ENCODE measurements at regions of chr7 and their contacts with region 1.

Region 1: DNA sequence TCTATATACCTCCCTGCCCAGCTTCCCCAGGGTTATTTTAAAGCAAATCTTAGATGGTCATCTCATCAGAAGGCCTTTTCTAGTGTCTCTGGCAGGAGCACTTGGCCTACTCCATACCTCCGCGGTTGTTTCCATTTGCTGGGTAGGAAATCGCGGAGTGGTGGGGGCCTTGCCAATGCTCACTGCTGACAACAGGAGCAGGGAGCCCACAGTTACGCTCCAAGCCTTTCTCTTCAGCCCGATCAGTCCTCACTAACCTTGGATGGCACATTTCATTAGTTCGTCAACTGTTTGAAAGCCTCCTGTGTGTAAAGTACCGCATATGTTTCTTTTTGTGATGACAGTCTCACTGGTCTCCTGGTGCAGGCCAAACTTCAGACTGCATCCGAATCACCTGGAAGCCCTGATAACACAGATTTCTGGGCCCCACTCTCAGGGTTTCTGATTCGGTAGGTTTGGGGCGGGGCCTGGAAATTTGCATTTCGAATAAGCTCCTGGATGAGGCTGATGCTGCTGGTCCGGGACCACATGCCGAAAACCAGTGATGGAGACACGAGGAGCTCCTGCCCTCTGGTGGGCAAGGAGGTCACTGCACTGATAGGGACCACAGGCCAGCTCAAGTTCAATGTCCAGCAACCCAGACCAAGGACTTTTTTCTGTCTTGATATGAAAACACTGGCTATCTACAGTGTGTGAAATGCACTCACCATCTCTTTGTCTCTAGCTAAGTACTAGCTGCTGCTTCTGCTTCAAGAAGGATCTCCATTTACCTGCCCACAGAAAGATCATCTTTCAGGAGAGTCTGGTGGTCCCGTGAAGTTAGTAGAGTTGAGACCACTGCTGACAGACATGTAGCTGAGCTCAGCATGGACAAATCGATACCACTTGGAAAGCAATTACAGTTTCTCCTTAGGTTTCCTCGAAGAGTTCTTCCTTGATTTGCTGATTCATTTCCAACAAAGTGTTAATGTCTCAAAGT is 14.0 kb downstream of the LRGUK start:
- DNase-seq: peak; percentile 57
- H3K4me3 ChIP-seq: no peak overlapping the region
- H3K27ac ChIP-seq: no peak overlapping the region
- H3K4me1 ChIP-seq: no peaks in the 10 kb centered on the region
- H3K27me3 ChIP-seq: peaks cover 2% of the 10 kb centered on the region in 2 experiments
- CTCF ChIP-seq: peak; percentile 80 to 94
- POLR2A ChIP-seq: no peak

Region 2: GRCh38 chr7:132709971-132710567 is 1431.1 kb before region 1 on chr7:
- CTCF ChIA-PET with region 1: interaction called, 8 read pairs
- POLR2A ChIA-PET with region 1: no interaction called
- dilution Hi-C with region 1: no loop called
- intact Hi-C with region 1: loop called (anchors 5 kb)
- DNase-seq: peak; percentile 59
- H3K4me3 ChIP-seq: no peak overlapping the region
- H3K27ac ChIP-seq: no peak overlapping the region
- H3K4me1 ChIP-seq: no peaks in the 10 kb centered on the region
- H3K27me3 ChIP-seq: peaks cover 0 to 2% of the 10 kb centered on the region in 2 experiments
- CTCF ChIP-seq: peak; percentile 53
- POLR2A ChIP-seq: no peak

Region 3: GRCh38 chr7:134154581-134155130 is 13.5 kb after region 1 on chr7:
- CTCF ChIA-PET with region 1: interaction called, 36 read pairs
- POLR2A ChIA-PET with region 1: no interaction called
- dilution Hi-C with region 1: no loop called
- intact Hi-C with region 1: no loop called
- DNase-seq: no peak
- H3K4me3 ChIP-seq: no peak overlapping the region
- H3K27ac ChIP-seq: no peak overlapping the region
- H3K4me1 ChIP-seq: no peaks in the 10 kb centered on the region
- H3K27me3 ChIP-seq: peaks cover 2 to 6% of the 10 kb centered on the region in 2 experiments
- CTCF ChIP-seq: no peak
- POLR2A ChIP-seq: no peak

Region 4: GRCh38 chr7:134209322-134210015 is 68.3 kb after region 1 on chr7:
- CTCF ChIA-PET with region 1: interaction called, 10 read pairs
- POLR2A ChIA-PET with region 1: no interaction called
- dilution Hi-C with region 1: no loop called
- intact Hi-C with region 1: no loop called
- DNase-seq: no peak
- H3K4me3 ChIP-seq: no peak overlapping the region
- H3K27ac ChIP-seq: no peak overlapping the region
- H3K4me1 ChIP-seq: peaks cover 8% of the 10 kb centered on the region
- H3K27me3 ChIP-seq: peaks cover 0 to 4% of the 10 kb centered on the region in 2 experiments
- CTCF ChIP-seq: no peak
- POLR2A ChIP-seq: no peak

Region 5: DNA sequence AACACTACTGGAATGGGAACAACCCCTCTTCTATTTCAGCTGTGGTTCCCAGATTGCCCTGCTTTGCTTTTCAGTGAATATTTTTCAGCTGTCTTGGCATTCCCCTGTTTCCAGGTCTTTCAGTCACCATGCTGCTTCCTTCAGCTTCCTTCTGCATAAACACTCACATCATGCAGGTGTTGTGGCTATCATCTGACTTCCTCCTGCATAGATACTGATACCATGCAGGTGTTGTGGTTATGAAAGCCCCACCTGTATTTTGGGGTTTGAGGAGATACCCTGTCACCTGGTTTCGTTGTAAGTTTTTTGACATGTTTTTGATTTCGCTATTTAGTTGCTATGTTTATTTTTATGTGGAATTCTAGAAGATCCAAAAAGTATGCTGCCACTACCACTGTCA is 104.1 kb after region 1 on chr7:
- CTCF ChIA-PET with region 1: no interaction called
- POLR2A ChIA-PET with region 1: no interaction called
- dilution Hi-C with region 1: no loop called
- intact Hi-C with region 1: no loop called
- DNase-seq: no peak
- H3K4me3 ChIP-seq: no peak overlapping the region
- H3K27ac ChIP-seq: no peak overlapping the region
- H3K4me1 ChIP-seq: no peaks in the 10 kb centered on the region
- H3K27me3 ChIP-seq: peaks cover 0 to 2% of the 10 kb centered on the region in 2 experiments
- CTCF ChIP-seq: no peak
- POLR2A ChIP-seq: no peak

Region 6: GRCh38 chr7:134355927-134356326 is 214.7 kb after region 1 on chr7:
- CTCF ChIA-PET with region 1: interaction called, 12 read pairs
- POLR2A ChIA-PET with region 1: no interaction called
- dilution Hi-C with region 1: no loop called
- intact Hi-C with region 1: loop called (anchors 10 kb)
- DNase-seq: peak; percentile 21
- H3K4me3 ChIP-seq: no peak overlapping the region
- H3K27ac ChIP-seq: no peak overlapping the region
- H3K4me1 ChIP-seq: no peaks in the 10 kb centered on the region
- H3K27me3 ChIP-seq: peaks cover 4 to 8% of the 10 kb centered on the region in 2 experiments
- CTCF ChIP-seq: no peak
- POLR2A ChIP-seq: no peak

Measured in endothelial cell of umbilical vein (primary cell).